Activated T-helper 1 cell treated with anti-CD3 and anti-CD28 coated beads, Interleukin-12 subunit alpha, Interleukin-12 subunit beta, Interleukin-2, Interleukin-4 antibody, amounts not matched to agents 30 ng/mL and 10 ng/mL and 1 ng/mL, durations not matched to agents 14 hours and 24 hours and 36 hours (primary cell): ENCODE measurements at regions of chr18 and their contacts with region 1.

Region 1: DNA sequence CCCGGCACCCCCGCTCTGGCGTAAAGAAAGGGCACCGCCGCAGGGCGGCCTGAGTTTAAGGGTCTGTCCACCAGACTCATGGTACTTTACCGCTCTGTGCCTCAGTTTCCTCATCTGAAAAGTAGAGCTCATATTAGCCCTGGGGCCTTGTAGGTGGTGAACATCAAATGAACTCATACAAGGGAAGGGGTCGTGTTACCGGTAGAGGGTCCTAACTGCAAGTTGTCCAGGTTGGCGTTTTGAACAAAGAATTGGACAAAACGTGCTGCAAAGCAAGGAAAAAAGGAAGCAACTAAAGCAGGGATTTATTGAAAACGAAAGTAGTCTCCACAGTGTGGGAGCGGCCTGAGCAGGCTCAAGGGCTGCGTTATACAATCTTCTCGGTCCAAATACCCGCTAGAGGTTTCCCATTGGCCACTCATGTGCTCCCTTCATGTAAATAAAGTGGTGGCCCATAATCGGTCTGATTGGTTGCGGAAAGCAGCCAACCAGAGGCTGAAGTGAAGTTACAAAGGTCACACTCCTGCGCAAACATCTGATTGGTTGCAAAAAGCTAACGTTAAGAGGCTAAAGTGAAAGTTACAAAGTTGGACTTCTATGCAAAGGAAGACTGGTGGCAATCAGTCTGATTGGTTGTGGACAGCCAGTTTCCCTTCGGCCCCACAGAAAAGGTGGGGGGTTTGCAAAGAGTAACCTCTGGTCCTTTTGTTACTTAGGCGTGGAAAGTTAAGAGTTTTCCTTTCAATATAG is 80.7 kb upstream of the LDLRAD4 start:
- DNase-seq: peak; percentile 76
- H3K4me3 Mint-ChIP-seq: peak overlapping the region; percentile 91
- H3K27ac Mint-ChIP-seq: peak overlapping the region; percentile 79
- H3K4me1 Mint-ChIP-seq: peaks cover 21% of the 10 kb centered on the region
- H3K27me3 Mint-ChIP-seq: peaks cover 11% of the 10 kb centered on the region

Region 2: DNA sequence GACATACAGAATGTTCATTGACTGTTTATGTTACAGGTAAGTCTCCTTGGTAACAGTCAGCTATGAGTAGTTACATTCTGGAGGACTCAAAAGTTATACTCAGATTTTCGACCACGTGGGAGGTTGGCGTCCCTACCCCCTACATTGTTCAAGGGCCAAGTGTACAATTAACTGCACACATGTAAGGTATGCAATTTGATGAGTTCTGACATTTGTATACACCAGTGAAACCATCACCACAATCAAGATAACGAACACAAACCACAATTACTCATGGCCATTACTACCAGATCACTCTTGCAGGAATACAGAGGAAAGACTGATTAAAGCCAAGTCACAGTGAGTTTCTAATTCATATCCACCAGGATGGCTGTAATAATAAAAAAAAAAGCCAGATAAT is 41.1 kb after region 1 on chr18:
- intact Hi-C with region 1: loop called (anchors 2 kb)
- DNase-seq: no peak
- H3K4me3 Mint-ChIP-seq: no peak overlapping the region
- H3K27ac Mint-ChIP-seq: no peak overlapping the region
- H3K4me1 Mint-ChIP-seq: peaks cover 32% of the 10 kb centered on the region
- H3K27me3 Mint-ChIP-seq: peaks cover 15% of the 10 kb centered on the region